HEK293 (cell line): ENCODE measurements at regions of chr7 and their contacts with region 1.

Region 1: GRCh38 chr7:106153891-106154449 is 41.9 kb upstream of the SYPL1 start:
- H3K4me3 ChIP-seq: no peak overlapping the region
- H3K27ac ChIP-seq: no peak overlapping the region
- H3K4me1 ChIP-seq: no peaks in the 10 kb centered on the region
- CTCF ChIP-seq: peak; percentile 84

Region 2: GRCh38 chr7:105278973-105279687 is 874.8 kb before region 1 on chr7:
- CTCF ChIA-PET with region 1: no interaction called
- POLR2A ChIA-PET with region 1: no interaction called
- H3K4me3 ChIP-seq: no peak overlapping the region
- H3K27ac ChIP-seq: no peak overlapping the region
- H3K4me1 ChIP-seq: no peaks in the 10 kb centered on the region
- CTCF ChIP-seq: no peak

Region 3: DNA sequence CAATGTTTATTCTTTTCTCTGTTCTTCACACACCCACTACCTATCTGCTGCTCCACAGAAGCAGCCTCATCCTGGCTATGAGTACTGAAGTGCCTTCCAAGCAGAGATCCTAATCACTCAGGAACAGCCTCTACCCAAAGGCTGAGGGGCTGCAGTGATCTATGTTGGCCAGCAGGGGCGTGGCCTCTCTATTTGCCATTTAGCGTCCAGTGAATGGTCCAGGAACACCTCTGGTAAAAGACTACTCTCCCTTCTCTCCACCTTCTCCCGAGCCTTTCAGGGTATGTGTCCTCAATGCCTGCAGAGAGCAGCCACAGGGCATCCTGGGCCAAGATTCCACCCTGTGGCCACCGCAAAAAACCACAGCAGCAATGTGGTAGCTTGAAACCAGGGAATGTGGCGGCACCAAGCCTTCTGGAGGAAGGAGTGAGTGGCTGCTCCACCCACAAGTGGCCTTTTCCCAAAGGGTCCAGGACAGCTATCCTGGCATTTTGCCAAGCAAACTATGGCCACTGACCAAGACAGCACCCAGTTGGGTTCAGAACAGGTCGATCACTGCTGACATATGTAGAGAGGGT is 112.7 kb before region 1 on chr7:
- CTCF ChIA-PET with region 1: interaction called, 12 read pairs
- POLR2A ChIA-PET with region 1: no interaction called
- H3K4me3 ChIP-seq: no peak overlapping the region
- H3K27ac ChIP-seq: no peak overlapping the region
- H3K4me1 ChIP-seq: 0 out of 2 replicates have a peak, but pooled peaks cover 2% of the 10 kb centered on the region
- CTCF ChIP-seq: peak; percentile 63

Region 4: GRCh38 chr7:106056513-106057203 is 97.3 kb before region 1 on chr7:
- CTCF ChIA-PET with region 1: interaction called, 144 read pairs
- POLR2A ChIA-PET with region 1: no interaction called
- H3K4me3 ChIP-seq: no peak overlapping the region
- H3K27ac ChIP-seq: no peak overlapping the region
- H3K4me1 ChIP-seq: no peaks in the 10 kb centered on the region
- CTCF ChIP-seq: peak; percentile 77

Region 5: DNA sequence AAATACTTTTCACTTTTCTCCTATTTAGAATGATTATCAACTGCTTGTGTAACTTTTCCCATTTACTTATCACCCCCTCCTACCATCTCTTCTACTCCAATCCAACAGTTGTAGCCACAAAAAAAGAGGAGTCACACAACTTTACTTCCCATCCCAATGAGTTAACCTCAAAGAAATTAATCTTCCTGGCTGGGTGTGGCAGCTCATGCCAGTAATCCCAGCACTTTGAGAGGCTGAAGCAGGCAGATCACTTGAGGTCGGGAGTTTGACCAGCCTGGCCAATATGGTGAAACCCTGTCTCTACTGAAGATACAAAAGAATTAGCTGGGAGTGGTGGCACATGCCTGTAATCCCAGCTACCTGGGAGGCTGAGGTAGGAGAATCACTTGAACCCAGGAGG is 61.8 kb before region 1 on chr7:
- CTCF ChIA-PET with region 1: interaction called, 10 read pairs
- POLR2A ChIA-PET with region 1: no interaction called
- H3K4me3 ChIP-seq: no peak overlapping the region
- H3K27ac ChIP-seq: no peak overlapping the region
- H3K4me1 ChIP-seq: peaks cover 9% of the 10 kb centered on the region
- CTCF ChIP-seq: no peak

Region 6: GRCh38 chr7:106112117-106112971 is 41.6 kb before region 1 on chr7 and contains the start of gene SYPL1:
- CTCF ChIA-PET with region 1: interaction called, 11 read pairs
- POLR2A ChIA-PET with region 1: no interaction called
- H3K4me3 ChIP-seq: peak within 1 kb of the TSS; percentile 89
- H3K27ac ChIP-seq: peak within 1 kb of the TSS; percentile 91
- H3K4me1 ChIP-seq: no peaks in the 10 kb centered on the region
- CTCF ChIP-seq: peak; percentile 65; the same call in 1 of the 2 replicates

Region 7: GRCh38 chr7:106139265-106140251 is 14.4 kb before region 1 on chr7:
- CTCF ChIA-PET with region 1: interaction called, 17 read pairs
- POLR2A ChIA-PET with region 1: no interaction called
- H3K4me3 ChIP-seq: no peak overlapping the region
- H3K27ac ChIP-seq: no peak overlapping the region
- H3K4me1 ChIP-seq: no peaks in the 10 kb centered on the region
- CTCF ChIP-seq: no peak